Psoas muscle (tissue), 8 donors: ENCODE measurements at regions of chr3 and their contacts with region 1.

Region 1: GRCh38 chr3:71064288-71064955 is 519.1 kb downstream of the FOXP1 start:
- DNase-seq: peak; percentile 55 to 70
- ATAC-seq: peak; percentile 46 to 63 (median 56)
- H3K4me3 ChIP-seq: peak overlapping the region; percentile 71
- H3K27ac ChIP-seq: peak overlapping the region; percentile 96
- H3K4me1 ChIP-seq: peaks cover 54% of the 10 kb centered on the region
- H3K27me3 ChIP-seq: no peaks in the 10 kb centered on the region
- CTCF ChIP-seq: peak; percentile 17

Region 2: GRCh38 chr3:71305231-71306206 is 241.1 kb after region 1 on chr3:
- intact Hi-C with region 1: loop called in 1 of 2 experiments (anchors 5 kb)
- DNase-seq: peak; percentile 20 to 64
- ATAC-seq: peak; percentile 93 to 98 (median 96)
- H3K4me3 ChIP-seq: peak overlapping the region; percentile 60
- H3K27ac ChIP-seq: peak overlapping the region; percentile 81
- H3K4me1 ChIP-seq: peaks cover 19% of the 10 kb centered on the region
- H3K27me3 ChIP-seq: no peaks in the 10 kb centered on the region
- CTCF ChIP-seq: no peak

Region 3: GRCh38 chr3:71397046-71397445 is 332.6 kb after region 1 on chr3:
- intact Hi-C with region 1: loop called in 1 of 2 experiments (anchors 10 kb)
- DNase-seq: no peak
- ATAC-seq: peak in 2 of 4 donors; percentile 68 to 73
- H3K4me3 ChIP-seq: no peak overlapping the region
- H3K27ac ChIP-seq: no peak overlapping the region
- H3K4me1 ChIP-seq: peaks cover 14% of the 10 kb centered on the region
- H3K27me3 ChIP-seq: no peaks in the 10 kb centered on the region
- CTCF ChIP-seq: peak; percentile 56